Calu3 (cell line): ENCODE measurements at regions of chr12 and their contacts with region 1.

Region 1: DNA sequence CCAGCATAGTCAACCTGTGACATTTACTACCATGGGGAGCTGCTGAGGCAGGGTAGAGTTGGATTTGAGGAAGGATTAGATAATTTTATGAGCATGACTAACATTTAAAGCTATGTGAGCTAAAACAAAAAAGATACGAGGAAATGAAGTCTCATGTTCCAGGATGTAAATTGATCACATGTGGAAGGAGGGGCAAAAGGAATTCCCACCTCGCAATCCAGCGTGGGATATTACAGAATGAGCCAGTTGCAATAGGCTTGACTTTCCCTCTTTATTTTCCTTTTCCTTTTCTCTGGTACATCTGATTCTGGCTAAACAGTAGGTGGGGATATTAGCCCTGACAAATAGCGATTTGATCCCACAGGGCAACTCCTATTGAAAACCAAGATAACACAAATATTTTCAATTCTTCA is 214.9 kb upstream of the HMGA2 start:
- DNase-seq: peak; percentile 44
- H3K4me3 Mint-ChIP-seq: no peak overlapping the region
- H3K27ac Mint-ChIP-seq: peak overlapping the region; percentile 67
- H3K4me1 Mint-ChIP-seq: peaks cover 67% of the 10 kb centered on the region
- H3K27me3 Mint-ChIP-seq: no peaks in the 10 kb centered on the region
- CTCF ChIP-seq: no peak

Region 2: GRCh38 chr12:65631621-65632111 is 22.3 kb after region 1 on chr12:
- CTCF ChIA-PET with region 1: interaction called, 11 read pairs
- intact Hi-C with region 1: no loop called
- DNase-seq: peak; percentile 72
- H3K4me3 Mint-ChIP-seq: peak overlapping the region; percentile 31
- H3K27ac Mint-ChIP-seq: peak overlapping the region; percentile 90
- H3K4me1 Mint-ChIP-seq: peaks cover 67% of the 10 kb centered on the region
- H3K27me3 Mint-ChIP-seq: no peaks in the 10 kb centered on the region
- CTCF ChIP-seq: no peak

Region 3: GRCh38 chr12:65649126-65649525 is 39.8 kb after region 1 on chr12:
- CTCF ChIA-PET with region 1: interaction called, 6 read pairs
- intact Hi-C with region 1: loop called (anchors 1 kb)
- DNase-seq: peak; percentile 68
- H3K4me3 Mint-ChIP-seq: peak overlapping the region; percentile 38
- H3K27ac Mint-ChIP-seq: peak overlapping the region; percentile 100
- H3K4me1 Mint-ChIP-seq: peaks cover 57% of the 10 kb centered on the region
- H3K27me3 Mint-ChIP-seq: no peaks in the 10 kb centered on the region
- CTCF ChIP-seq: no peak

Region 4: DNA sequence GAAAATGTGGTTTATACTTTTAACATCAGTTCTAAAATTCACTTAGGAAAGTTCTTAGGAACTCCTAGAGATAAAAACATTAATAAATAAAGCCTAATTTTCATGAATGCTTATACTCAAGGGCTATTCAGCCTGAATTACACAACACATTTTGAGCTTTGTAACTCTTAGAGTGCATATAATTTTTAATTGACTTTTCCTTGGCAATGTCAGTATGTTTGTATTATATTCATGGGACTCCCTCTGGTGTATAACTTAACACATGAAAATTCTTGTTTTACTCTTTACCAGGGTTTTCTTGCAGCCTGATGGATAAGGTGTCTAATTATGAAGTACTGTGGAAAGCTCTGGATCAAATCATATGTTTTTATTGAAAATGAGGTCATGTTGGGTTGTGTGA is 64.4 kb after region 1 on chr12:
- CTCF ChIA-PET with region 1: interaction called, 6 read pairs
- intact Hi-C with region 1: loop called (anchors 1 kb)
- DNase-seq: no peak
- H3K4me3 Mint-ChIP-seq: no peak overlapping the region
- H3K27ac Mint-ChIP-seq: peak overlapping the region; percentile 85
- H3K4me1 Mint-ChIP-seq: peaks cover 38% of the 10 kb centered on the region
- H3K27me3 Mint-ChIP-seq: no peaks in the 10 kb centered on the region
- CTCF ChIP-seq: no peak

Region 5: GRCh38 chr12:66144791-66145754 is 535.7 kb after region 1 on chr12:
- CTCF ChIA-PET with region 1: no interaction called
- intact Hi-C with region 1: no loop called
- DNase-seq: peak; percentile 76
- H3K4me3 Mint-ChIP-seq: no peak overlapping the region
- H3K27ac Mint-ChIP-seq: peak overlapping the region; percentile 60
- H3K4me1 Mint-ChIP-seq: peaks cover 13% of the 10 kb centered on the region
- H3K27me3 Mint-ChIP-seq: no peaks in the 10 kb centered on the region
- CTCF ChIP-seq: peak; percentile 76